Activated naive CD4-positive, alpha-beta T cell treated with anti-CD3 and anti-CD28 coated beads for 36 hours (primary cell): ENCODE measurements at regions of chr20 and their contacts with region 1.

Region 1: DNA sequence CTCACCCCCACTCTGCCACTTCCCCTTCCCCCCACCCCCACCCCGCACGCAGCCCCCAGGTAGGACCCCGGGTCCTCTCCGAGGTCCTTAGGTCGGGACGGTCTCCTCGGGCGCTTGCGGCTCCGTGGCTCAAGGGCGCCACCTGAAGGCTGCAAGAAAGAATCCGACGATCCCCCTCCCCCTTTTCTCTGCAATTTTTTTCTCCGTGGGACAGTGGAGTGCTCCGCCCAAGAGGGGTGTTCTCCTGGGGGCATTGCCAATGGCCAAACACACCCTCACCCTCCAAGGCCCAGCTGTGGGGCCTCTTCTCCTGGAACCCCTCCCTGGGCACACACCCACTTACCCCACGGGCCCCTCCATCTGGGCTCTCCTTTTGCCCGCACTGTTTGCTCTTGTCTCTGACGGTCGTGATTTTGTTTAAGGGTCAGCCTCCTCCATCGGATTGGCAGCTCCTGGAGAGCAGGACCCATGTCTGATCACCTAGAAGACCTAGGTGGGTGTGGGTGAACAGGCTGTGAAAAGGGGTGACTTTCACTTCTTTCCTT is 1.1 kb upstream of the TMEM74B start:
- DNase-seq: peak; percentile 68
- H3K4me3 Mint-ChIP-seq: peak overlapping the region; percentile 41
- H3K27ac Mint-ChIP-seq: no peak overlapping the region
- H3K4me1 Mint-ChIP-seq: peaks cover 6% of the 10 kb centered on the region
- H3K27me3 Mint-ChIP-seq: peaks cover 24% of the 10 kb centered on the region

Region 2: GRCh38 chr20:1212607-1213396 is 26.9 kb after region 1 on chr20:
- CTCF ChIA-PET with region 1: interaction called, 3 read pairs
- intact Hi-C with region 1: loop called (anchors 2 kb)
- DNase-seq: peak; percentile 88
- H3K4me3 Mint-ChIP-seq: no peak overlapping the region
- H3K27ac Mint-ChIP-seq: no peak overlapping the region
- H3K4me1 Mint-ChIP-seq: peaks cover 39% of the 10 kb centered on the region
- H3K27me3 Mint-ChIP-seq: no peaks in the 10 kb centered on the region